ENCODE measurements at regions of chr1 and their contacts with region 1.

Region 1: DNA sequence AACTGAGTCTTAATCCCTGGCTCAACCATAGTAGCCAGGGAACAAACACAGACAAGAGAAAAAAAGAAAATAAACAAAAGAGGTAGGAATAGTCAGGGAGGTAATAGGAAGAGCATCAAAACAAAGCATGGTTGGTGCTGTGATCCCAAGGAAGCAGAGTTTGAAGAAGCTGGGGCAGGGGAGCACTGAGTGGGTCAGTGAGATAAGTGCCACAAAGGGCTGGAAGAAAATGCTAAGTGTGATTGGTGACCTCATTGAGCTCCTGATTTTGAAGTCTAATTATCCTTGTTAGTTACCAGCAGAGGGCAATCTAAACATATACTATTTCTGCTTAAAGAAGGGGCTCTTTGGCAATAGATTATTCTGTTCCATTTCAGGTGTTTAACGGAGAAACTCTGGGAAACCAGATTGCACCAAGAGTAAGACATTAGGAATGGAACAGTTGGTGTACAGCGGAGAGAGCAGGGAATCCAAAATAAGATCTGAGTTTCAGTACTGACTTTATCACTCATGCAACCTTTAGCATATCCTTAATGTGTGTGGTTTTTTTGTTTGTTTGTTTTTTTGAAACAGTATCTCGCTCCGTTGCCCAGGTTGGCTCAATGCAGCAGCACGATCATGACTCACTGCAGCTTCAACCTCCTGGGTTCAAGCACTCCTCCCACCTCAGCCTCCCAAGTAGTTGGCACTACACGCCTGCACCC is 30.7 kb upstream of the KIAA1614 start:
- DNase-seq: no peak
- H3K4me3 ChIP-seq: no peak overlapping the region
- H3K4me3 Mint-ChIP-seq: no peak overlapping the region
- H3K27ac Mint-ChIP-seq: no peak overlapping the region
- H3K4me1 ChIP-seq: peaks cover 8% of the 10 kb centered on the region; the same call in 1 of the 2 replicates
- H3K4me1 Mint-ChIP-seq: peaks cover 14% of the 10 kb centered on the region
- H3K27me3 ChIP-seq: no peaks in the 10 kb centered on the region
- H3K27me3 Mint-ChIP-seq: no peaks in the 10 kb centered on the region
- CTCF ChIP-seq: peak; percentile 38 to 47

Region 2: DNA sequence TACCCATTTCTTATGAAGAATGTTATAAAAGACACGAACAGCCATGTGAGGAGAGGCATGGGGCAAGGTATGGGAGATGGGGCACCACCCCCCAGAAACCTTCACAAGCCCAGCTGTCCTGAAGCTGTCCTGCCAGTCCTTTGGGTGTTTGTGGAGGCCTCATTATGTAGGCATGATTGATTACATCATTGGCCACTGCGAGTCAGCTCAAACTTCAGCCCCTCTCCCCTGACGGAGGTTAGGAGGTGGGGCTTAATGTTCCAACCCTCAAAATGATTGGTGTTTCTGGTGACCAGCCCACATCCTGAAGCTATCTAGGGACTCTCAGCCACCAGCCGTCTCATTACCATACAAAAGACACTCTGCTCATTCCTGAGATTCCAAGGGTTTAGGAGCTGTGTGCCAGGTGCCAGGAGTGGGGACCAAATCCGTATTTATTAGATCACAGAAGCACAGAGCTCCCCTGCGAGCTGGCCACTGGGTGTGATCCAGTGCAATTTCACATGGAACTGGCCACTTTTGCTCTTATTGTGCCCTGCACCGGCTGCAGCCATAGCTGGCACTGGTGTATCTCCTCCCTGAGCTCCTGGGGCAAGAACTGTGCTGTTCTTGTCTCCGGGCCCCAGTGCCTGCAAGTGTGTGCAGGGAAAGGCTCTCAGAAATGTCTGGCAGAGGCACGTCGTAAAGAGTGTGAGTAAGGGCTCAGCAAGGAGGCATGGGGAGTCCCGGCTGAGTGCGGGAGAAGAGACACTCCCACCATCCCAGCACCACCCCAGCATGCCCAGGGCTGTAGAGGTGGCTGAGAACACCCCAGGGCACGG is 41.3 kb after region 1 on chr1:
- CTCF ChIA-PET with region 1: interaction called, 13 read pairs
- POLR2A ChIA-PET with region 1: no interaction called
- intact Hi-C with region 1: loop called (anchors 1 kb)
- DNase-seq: peak; percentile 87 to 89
- H3K4me3 ChIP-seq: no peak overlapping the region
- H3K4me3 Mint-ChIP-seq: peak overlapping the region; percentile 39
- H3K27ac Mint-ChIP-seq: peak overlapping the region; percentile 91
- H3K4me1 ChIP-seq: peaks cover 33% of the 10 kb centered on the region
- H3K4me1 Mint-ChIP-seq: peaks cover 16% of the 10 kb centered on the region
- H3K27me3 ChIP-seq: no peaks in the 10 kb centered on the region
- H3K27me3 Mint-ChIP-seq: no peaks in the 10 kb centered on the region
- CTCF ChIP-seq: no peak

Region 3: GRCh38 chr1:181021811-181022434 is 140.0 kb after region 1 on chr1:
- CTCF ChIA-PET with region 1: interaction called, 15 read pairs
- POLR2A ChIA-PET with region 1: no interaction called
- intact Hi-C with region 1: loop called (anchors 5 kb)
- DNase-seq: peak; percentile 58 to 71
- H3K4me3 ChIP-seq: peak overlapping the region; percentile 81
- H3K4me3 Mint-ChIP-seq: peak overlapping the region; percentile 90
- H3K27ac Mint-ChIP-seq: peak overlapping the region; percentile 96
- H3K4me1 ChIP-seq: 0 out of 2 replicates have a peak, but pooled peaks cover 5% of the 10 kb centered on the region
- H3K4me1 Mint-ChIP-seq: peaks cover 8% of the 10 kb centered on the region
- H3K27me3 ChIP-seq: no peaks in the 10 kb centered on the region
- H3K27me3 Mint-ChIP-seq: peaks cover 3% of the 10 kb centered on the region
- CTCF ChIP-seq: no peak

Region 4: DNA sequence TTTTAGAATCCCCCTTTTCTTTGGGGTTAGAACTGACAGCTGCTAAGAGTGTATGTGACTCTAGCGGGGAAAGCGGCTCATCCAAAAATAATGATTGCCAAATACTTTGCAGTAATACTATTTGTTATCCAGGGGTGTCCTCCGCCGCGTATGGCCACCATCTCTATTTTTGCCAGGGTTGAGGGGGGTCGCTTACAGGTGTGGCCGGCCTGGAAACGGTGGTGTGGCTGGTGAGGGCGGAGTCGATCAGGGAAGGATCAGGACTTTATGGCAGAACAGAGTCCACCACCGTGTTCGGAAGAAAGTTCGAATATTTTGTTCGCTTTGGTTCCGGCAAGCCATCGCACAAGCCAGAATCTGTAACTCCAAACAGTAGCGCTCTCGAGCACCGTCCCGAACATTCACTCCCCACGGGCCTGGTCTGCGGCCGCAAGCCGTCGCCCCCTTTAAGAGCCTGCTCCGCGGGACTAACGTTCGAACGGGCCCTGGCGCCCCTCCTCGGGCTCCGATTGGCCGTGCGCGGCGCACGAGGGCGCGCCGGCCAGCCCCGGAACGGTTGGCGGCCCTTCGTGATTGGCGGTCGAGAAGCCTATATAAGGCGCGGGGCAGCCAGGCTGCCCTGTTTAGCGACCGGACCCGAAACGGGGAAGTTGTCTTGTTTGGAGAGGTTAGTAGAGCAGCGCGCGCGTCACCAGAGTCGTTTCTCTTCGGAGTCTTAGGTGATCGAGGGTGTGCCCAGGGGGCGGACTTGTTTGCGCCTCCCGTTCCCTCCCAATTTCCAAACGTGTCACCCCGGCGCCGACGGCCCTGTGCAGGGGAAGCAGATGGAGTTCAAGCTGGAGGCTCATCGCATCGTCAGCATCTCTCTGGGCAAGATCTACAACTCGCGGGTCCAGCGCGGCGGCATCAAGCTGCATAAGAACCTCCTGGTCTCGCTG is 206.4 kb after region 1 on chr1 and contains the start of gene IER5:
- CTCF ChIA-PET with region 1: interaction called, 8 read pairs
- POLR2A ChIA-PET with region 1: interaction called, 4 read pairs
- intact Hi-C with region 1: loop called (anchors 1 kb)
- DNase-seq: peak; percentile 95 to 97
- H3K4me3 ChIP-seq: peak within 1 kb of the TSS; percentile 76
- H3K4me3 Mint-ChIP-seq: peak within 1 kb of the TSS; percentile 97
- H3K27ac Mint-ChIP-seq: peak within 1 kb of the TSS; percentile 64
- H3K4me1 ChIP-seq: peaks cover 30% of the 10 kb centered on the region
- H3K4me1 Mint-ChIP-seq: peaks cover 26% of the 10 kb centered on the region
- H3K27me3 ChIP-seq: no peaks in the 10 kb centered on the region
- H3K27me3 Mint-ChIP-seq: no peaks in the 10 kb centered on the region
- CTCF ChIP-seq: no peak
- total RNA-seq, gene IER5: 8.6 and 9.4 TPM in 2 replicates

Region 5: DNA sequence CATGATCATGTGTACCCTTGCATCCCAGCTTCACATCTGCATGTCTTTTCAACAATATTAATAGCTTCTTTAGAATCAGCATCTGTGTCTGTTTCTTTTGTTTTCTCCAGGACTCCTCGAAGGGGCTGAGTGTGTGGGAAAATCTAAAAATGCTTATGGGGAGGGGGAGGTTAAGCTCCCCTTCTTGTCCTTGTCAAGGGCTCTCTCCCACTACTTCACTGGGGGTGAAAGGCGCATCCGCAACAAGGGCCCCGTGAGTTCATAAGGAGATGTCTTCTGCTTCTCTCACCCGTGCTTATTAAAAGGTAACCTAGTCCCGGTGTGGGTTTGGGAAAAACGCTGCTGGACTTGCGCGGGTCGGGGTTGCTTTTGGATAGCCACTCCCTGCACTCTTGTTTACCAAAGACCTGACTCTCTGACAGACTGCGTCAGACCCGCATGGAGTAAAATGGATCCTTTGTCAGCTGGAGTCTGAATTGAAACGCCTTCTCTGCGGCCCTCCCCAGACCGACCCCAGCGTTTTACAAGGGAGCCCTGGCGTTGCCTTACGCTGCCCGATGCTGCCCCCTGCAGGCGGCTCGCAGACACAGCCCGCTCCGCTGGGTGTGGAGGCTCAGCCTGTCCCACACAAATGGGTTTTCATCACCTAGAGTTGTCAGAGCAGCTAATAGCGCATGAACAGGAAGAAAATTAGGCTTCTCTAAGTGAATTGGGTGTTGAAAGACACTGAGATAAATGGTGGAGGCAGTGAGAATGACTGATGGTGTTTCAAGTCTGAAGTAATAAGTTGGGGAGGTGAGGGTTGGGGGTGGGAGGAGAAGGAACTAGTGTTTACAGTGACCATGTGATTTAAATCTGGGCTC is 260.4 kb after region 1 on chr1:
- CTCF ChIA-PET with region 1: interaction called, 23 read pairs
- POLR2A ChIA-PET with region 1: no interaction called
- intact Hi-C with region 1: loop called (anchors 1 kb)
- DNase-seq: peak; percentile 87 to 92
- H3K4me3 ChIP-seq: peak overlapping the region; percentile 15; the same call in 1 of the 2 replicates
- H3K4me3 Mint-ChIP-seq: peak overlapping the region; percentile 26
- H3K27ac Mint-ChIP-seq: no peak overlapping the region
- H3K4me1 ChIP-seq: no peaks in the 10 kb centered on the region
- H3K4me1 Mint-ChIP-seq: peaks cover 16% of the 10 kb centered on the region
- H3K27me3 ChIP-seq: no peaks in the 10 kb centered on the region
- H3K27me3 Mint-ChIP-seq: peaks cover 3% of the 10 kb centered on the region
- CTCF ChIP-seq: peak; percentile 97 to 98